Activated CD4-positive, alpha-beta T cell treated with anti-CD3 and anti-CD28 coated beads for 36 hours (primary cell): ENCODE measurements at regions of chr15 and their contacts with region 1.

Region 1: GRCh38 chr15:58987489-58988005 is at the start of gene RNF111:
- DNase-seq: peak; percentile 93
- ATAC-seq: peak; percentile 91
- H3K4me3 Mint-ChIP-seq: peak within 1 kb of the TSS; percentile 96
- H3K27ac Mint-ChIP-seq: peak within 1 kb of the TSS; percentile 92
- H3K4me1 Mint-ChIP-seq: peaks cover 37% of the 10 kb centered on the region
- H3K27me3 Mint-ChIP-seq: no peaks in the 10 kb centered on the region
- total RNA-seq, gene RNF111: 27.0 to 36.0 TPM

Region 2: GRCh38 chr15:58770857-58771620 is 216.5 kb before region 1 on chr15 and contains the start of gene MINDY2:
- CTCF ChIA-PET with region 1: no interaction called
- POLR2A ChIA-PET with region 1: no interaction called
- intact Hi-C with region 1: loop called in 1 of 2 experiments (anchors 2 kb)
- DNase-seq: peak; percentile 97
- ATAC-seq: peak; percentile 96
- H3K4me3 Mint-ChIP-seq: no peak within 1 kb of the TSS
- H3K27ac Mint-ChIP-seq: peak within 1 kb of the TSS; percentile 88
- H3K4me1 Mint-ChIP-seq: peaks cover 12% of the 10 kb centered on the region
- H3K27me3 Mint-ChIP-seq: no peaks in the 10 kb centered on the region
- total RNA-seq, gene MINDY2: 8.2 to 9.2 TPM

Region 3: DNA sequence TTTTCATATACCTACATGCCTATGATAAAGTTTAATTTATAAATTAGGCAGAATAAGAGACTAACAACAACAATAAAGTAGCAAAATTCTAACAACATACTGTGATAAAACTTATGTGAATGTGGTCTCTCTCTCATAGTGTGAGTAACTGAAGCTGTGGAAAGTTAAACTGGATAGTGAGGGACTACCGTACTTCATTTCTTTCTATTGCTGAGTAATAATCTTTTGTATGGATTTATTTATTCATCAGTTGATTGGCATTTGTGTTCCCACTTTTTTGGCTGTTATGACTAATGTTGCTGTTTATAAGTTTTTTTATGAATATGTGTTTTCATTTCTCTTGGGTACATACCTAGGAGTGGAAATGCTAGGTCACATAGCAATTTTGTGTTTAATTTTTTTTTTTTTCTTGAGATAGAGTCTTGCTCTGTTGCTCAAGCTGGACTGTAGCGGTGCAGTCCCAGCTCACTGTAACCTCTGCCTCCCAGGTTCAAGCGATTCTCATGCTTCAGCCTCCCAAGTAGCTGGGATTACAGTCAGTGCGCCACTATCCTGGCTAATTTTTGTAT is 40.9 kb after region 1 on chr15:
- CTCF ChIA-PET with region 1: interaction called, 3 read pairs
- POLR2A ChIA-PET with region 1: no interaction called
- intact Hi-C with region 1: loop called in 1 of 2 experiments (anchors 5 kb)
- DNase-seq: no peak
- ATAC-seq: peak; percentile 75
- H3K4me3 Mint-ChIP-seq: no peak overlapping the region
- H3K27ac Mint-ChIP-seq: no peak overlapping the region
- H3K4me1 Mint-ChIP-seq: peaks cover 38% of the 10 kb centered on the region
- H3K27me3 Mint-ChIP-seq: no peaks in the 10 kb centered on the region

Region 4: GRCh38 chr15:59590027-59590426 is 602.5 kb after region 1 on chr15:
- CTCF ChIA-PET with region 1: no interaction called
- POLR2A ChIA-PET with region 1: interaction called, 10 read pairs
- intact Hi-C with region 1: no loop called
- DNase-seq: peak; percentile 30
- ATAC-seq: peak; percentile 91
- H3K4me3 Mint-ChIP-seq: peak overlapping the region; percentile 54
- H3K27ac Mint-ChIP-seq: peak overlapping the region; percentile 83
- H3K4me1 Mint-ChIP-seq: peaks cover 30% of the 10 kb centered on the region
- H3K27me3 Mint-ChIP-seq: peaks cover 4% of the 10 kb centered on the region